Panc1 (cell line): ENCODE measurements at regions of chr16 and their contacts with region 1.

Region 1: DNA sequence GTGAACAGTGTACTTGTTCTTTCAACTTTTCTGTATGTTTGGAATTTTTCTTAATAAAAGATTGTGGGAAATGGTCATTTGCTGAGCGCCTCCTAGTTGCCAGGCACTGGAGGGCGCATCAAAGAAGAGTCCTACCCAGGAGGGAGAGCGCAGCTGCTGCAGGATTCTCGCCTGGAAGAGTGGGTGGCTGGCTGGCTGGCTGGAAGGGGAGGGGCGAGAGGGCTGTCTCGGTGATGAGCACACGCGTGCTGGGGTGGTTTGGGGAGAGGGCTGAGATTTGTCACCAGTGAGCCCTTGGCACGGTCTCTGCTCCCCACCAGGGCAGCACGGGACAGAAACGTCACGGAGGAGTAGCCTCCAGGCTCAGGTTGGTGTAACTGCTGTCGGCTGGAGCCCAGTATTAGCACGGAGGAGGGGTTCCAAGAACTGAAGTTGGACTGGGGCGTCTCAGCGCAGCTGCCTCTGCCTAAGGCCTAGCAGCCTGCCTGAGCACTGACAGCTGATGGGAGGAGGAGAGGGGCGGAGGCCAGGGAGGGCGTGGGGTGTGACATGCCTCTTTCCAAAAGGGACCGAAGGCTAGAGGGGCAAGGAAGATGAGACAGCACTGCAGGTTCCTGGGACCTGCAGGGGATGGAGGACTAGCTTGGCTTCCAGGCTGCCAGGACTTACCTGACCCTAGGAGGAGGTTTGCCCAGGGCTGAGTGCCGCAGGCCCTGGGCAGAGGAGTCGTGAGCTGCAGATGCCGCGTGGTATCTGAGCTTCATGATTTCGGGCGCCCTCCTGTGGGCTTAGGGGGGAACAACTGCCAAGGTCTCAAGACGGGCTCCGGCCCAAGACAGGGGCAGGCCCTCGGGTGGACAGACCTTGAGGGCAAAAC is 5.7 kb downstream of the LDHD start:
- DNase-seq: peak; percentile 73
- ATAC-seq: peak; percentile 69
- H3K4me3 ChIP-seq: peak overlapping the region; percentile 26 to 53
- H3K27ac ChIP-seq: peak overlapping the region; percentile 86
- H3K4me1 ChIP-seq: peaks cover 54% of the 10 kb centered on the region
- H3K27me3 ChIP-seq: no peaks in the 10 kb centered on the region
- CTCF ChIP-seq: peak; percentile 82

Region 2: DNA sequence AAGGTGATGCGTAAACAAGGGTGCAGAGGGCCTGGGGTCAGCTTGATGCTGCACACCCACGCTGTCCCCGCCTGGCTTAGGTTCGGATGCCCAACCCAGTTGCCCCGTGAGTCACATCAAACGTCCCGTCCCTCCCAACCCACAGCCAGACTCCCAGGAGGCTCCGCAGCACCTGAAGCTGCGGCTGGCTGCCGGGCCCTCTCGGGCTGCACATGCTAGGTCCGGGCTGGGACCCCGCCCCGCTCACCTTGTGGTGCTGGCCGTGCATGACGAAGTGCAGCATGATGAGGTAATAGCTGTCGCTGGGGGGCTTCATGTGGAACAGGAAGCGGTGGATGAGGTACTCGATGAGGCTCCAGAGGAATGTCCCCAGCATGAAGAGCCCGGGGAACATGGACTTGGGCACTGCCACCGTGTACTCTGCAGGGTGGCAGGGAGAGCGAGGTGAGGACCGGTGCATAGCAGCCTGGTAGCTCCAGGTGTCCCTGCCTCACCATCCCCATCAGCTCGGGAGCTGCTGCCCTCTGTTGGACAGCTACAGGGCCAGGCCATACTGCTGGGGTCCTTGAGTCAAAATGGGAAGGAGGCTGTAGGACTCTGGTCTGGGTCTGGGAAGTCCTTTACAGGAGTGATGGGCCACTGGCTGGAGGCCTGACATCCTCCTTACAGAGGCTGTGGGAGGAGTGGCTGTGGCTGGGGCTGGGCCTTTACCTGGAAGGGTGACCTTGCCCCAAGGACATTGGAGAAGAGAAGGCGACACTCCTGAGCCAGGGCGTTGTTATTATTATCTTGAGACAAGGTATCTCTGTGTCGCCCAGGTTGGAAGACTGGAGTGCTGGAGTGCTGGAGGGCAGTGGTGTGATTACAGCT is 391.9 kb before region 1 on chr16:
- CTCF ChIA-PET with region 1: no interaction called
- POLR2A ChIA-PET with region 1: interaction called, 12 read pairs
- in situ Hi-C with region 1: no loop called
- intact Hi-C with region 1: no loop called
- DNase-seq: no peak
- ATAC-seq: 0 out of 2 replicates have a peak, but pooled peaks have one; percentile 43
- H3K4me3 ChIP-seq: no peak overlapping the region
- H3K27ac ChIP-seq: no peak overlapping the region
- H3K4me1 ChIP-seq: no peaks in the 10 kb centered on the region
- H3K27me3 ChIP-seq: no peaks in the 10 kb centered on the region
- CTCF ChIP-seq: no peak; the same call in 1 of the 2 replicates

Region 3: GRCh38 chr16:74998481-74999218 is 112.2 kb before region 1 on chr16 and contains the start of gene ZNRF1:
- CTCF ChIA-PET with region 1: interaction called, 25 read pairs
- POLR2A ChIA-PET with region 1: no interaction called
- in situ Hi-C with region 1: no loop called
- intact Hi-C with region 1: loop called (anchors 2 kb)
- DNase-seq: peak; percentile 54
- ATAC-seq: peak; percentile 86
- H3K4me3 ChIP-seq: peak within 1 kb of the TSS; percentile 76 to 83
- H3K27ac ChIP-seq: peak within 1 kb of the TSS; percentile 79
- H3K4me1 ChIP-seq: peaks cover 22% of the 10 kb centered on the region
- H3K27me3 ChIP-seq: no peaks in the 10 kb centered on the region
- CTCF ChIP-seq: peak; percentile 77
- total RNA-seq, gene ZNRF1: 52.3 TPM

Region 4: GRCh38 chr16:75175074-75175473 is 64.2 kb after region 1 on chr16:
- CTCF ChIA-PET with region 1: no interaction called
- POLR2A ChIA-PET with region 1: interaction called, 11 read pairs
- in situ Hi-C with region 1: no loop called
- intact Hi-C with region 1: no loop called
- DNase-seq: no peak
- ATAC-seq: no peak
- H3K4me3 ChIP-seq: no peak overlapping the region
- H3K27ac ChIP-seq: no peak overlapping the region
- H3K4me1 ChIP-seq: no peaks in the 10 kb centered on the region
- H3K27me3 ChIP-seq: no peaks in the 10 kb centered on the region
- CTCF ChIP-seq: no peak